ENCODE measurements at regions of chr10 and their contacts with region 1.

Region 1: DNA sequence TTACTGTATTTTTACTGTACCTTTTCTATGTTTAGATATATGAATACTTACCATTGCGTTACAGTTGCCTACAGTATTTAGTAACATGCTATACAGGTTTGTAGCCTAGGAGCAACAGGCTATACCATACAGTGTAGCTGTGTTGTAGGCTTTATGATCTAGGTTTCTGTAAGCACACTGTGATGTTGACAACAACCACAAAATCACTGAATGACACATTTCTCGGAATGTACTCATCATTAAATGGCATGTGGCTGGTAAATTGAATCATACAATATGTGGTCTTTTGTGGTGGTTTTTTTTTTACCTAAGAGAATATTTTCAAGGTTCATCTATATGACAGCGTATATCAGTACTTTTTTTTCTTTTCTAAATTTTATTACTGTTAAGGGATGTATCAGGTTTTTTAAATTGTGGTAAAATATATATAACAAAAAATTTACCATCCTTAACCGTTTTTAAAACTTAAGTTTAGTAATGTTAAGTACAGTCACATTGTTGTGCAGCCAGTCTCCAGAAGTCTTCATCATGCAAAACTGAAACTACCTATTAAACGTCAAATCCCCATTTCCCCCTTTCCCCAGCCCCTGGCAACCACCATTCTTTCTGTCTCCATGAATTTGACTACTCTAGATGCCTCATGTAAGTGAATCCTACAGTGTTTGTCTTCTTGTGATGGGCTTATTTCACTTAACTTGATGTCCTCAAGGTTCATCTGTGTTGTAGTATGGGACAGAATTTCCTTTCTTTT is 21.5 kb downstream of the BTAF1 start:
- DNase-seq: no peak
- H3K4me3 ChIP-seq: no peak overlapping the region
- H3K27ac ChIP-seq: no peak overlapping the region
- H3K4me1 ChIP-seq: no peaks in the 10 kb centered on the region
- CTCF ChIP-seq: no peak

Region 2: GRCh38 chr10:91969297-91969696 is 24.2 kb after region 1 on chr10:
- CTCF ChIA-PET with region 1: no interaction called
- POLR2A ChIA-PET with region 1: interaction called, 11 read pairs
- intact Hi-C with region 1: no loop called
- DNase-seq: no peak
- H3K4me3 ChIP-seq: no peak overlapping the region
- H3K27ac ChIP-seq: no peak overlapping the region
- H3K4me1 ChIP-seq: no peaks in the 10 kb centered on the region
- CTCF ChIP-seq: no peak